Activated CD8-positive, alpha-beta T cell treated with anti-CD3 and anti-CD28 coated beads for 36 hours (primary cell): ENCODE measurements at regions of chr11 and their contacts with region 1.

Region 1: GRCh38 chr11:6377902-6378639 is 12.2 kb upstream of the SMPD1 start:
- DNase-seq: no peak
- ATAC-seq: peak; percentile 70
- H3K4me3 Mint-ChIP-seq: no peak overlapping the region
- H3K27ac Mint-ChIP-seq: peak overlapping the region; percentile 69
- H3K4me1 Mint-ChIP-seq: peaks cover 24% of the 10 kb centered on the region
- H3K27me3 Mint-ChIP-seq: no peaks in the 10 kb centered on the region
- CTCF ChIP-seq: no peak

Region 2: GRCh38 chr11:6353367-6353987 is 24.6 kb before region 1 on chr11:
- CTCF ChIA-PET with region 1: interaction called, 11 read pairs
- POLR2A ChIA-PET with region 1: no interaction called
- intact Hi-C with region 1: no loop called
- DNase-seq: peak; percentile 68
- ATAC-seq: peak; percentile 65
- H3K4me3 Mint-ChIP-seq: no peak overlapping the region
- H3K27ac Mint-ChIP-seq: no peak overlapping the region
- H3K4me1 Mint-ChIP-seq: peaks cover 28% of the 10 kb centered on the region
- H3K27me3 Mint-ChIP-seq: no peaks in the 10 kb centered on the region
- CTCF ChIP-seq: peak; percentile 100

Region 3: GRCh38 chr11:6402561-6402981 is 24.5 kb after region 1 on chr11:
- CTCF ChIA-PET with region 1: interaction called, 15 read pairs
- POLR2A ChIA-PET with region 1: interaction called, 9 read pairs
- intact Hi-C with region 1: no loop called
- DNase-seq: peak; percentile 92
- ATAC-seq: peak; percentile 82
- H3K4me3 Mint-ChIP-seq: peak overlapping the region; percentile 50
- H3K27ac Mint-ChIP-seq: peak overlapping the region; percentile 93
- H3K4me1 Mint-ChIP-seq: peaks cover 75% of the 10 kb centered on the region
- H3K27me3 Mint-ChIP-seq: no peaks in the 10 kb centered on the region
- CTCF ChIP-seq: no peak

Region 4: DNA sequence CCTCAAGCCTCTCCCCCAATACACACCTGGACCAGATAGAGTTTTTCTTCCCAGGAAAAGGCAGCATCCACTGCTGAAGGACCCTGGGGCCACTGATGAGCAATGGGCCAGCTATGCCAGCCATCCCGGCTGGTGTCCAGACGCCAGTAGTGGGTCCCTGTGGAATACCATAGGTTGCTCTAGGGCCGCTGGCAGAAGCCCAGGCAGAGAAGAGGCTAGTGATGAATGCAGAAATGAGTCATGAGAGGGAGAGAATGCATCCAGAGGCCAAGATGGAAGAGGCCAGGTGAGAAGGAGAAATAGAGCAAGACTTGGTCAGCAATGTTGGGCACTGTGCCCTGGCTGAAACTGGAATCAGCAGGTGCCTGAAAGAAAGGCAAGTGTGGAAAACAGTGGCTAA is 53.8 kb after region 1 on chr11:
- CTCF ChIA-PET with region 1: interaction called, 47 read pairs
- POLR2A ChIA-PET with region 1: no interaction called
- intact Hi-C with region 1: no loop called
- DNase-seq: no peak
- ATAC-seq: no peak
- H3K4me3 Mint-ChIP-seq: no peak overlapping the region
- H3K27ac Mint-ChIP-seq: no peak overlapping the region
- H3K4me1 Mint-ChIP-seq: peaks cover 3% of the 10 kb centered on the region
- H3K27me3 Mint-ChIP-seq: no peaks in the 10 kb centered on the region
- CTCF ChIP-seq: no peak

Region 5: DNA sequence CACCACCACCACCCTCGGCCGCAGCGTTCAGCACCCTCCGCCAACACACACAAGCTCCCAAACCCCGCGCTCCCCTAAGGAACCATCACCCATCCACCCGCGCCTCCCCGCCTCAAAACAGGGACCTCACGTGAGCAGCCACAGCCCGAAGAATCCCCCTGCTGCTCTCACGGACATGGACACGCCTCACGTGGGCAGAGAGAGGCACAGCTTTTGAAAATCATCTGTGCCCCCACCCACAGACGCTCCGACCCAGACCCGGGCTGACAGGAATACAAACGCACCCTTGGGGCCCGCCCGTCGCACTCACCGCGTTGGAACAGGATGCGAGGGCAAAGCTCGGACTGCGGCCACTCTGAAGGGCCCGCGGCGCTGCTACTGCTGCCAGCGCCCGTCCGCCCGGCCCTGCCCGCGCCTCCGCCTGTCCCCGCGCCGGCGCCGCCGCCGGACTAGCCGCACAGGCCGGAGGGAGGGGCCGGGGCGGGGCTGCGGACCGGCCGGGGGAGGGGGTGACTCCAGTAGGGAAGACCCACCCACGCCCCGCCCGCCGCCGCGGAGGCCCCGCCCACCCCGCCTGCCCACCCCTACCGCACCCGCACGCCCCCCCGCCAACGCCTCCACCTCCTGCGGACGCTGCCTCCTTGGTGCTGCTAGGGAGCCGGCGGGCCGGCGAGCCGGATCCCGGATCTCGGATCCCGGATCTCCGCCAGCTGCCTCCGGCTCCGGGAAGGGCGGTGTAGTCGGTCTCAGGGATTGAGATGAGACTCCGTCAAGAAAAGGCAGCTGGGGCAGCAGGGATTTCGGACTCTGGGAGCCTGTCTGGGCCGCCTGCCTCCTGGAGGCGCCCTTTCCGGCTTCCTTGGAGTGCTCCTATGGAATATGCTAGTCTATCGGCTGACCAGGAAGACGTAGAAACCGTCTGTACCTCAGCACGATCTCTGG is 95.7 kb after region 1 on chr11 and contains the start of gene TRIM3:
- CTCF ChIA-PET with region 1: interaction called, 41 read pairs
- POLR2A ChIA-PET with region 1: no interaction called
- intact Hi-C with region 1: no loop called
- DNase-seq: peak; percentile 64
- ATAC-seq: peak; percentile 66
- H3K4me3 Mint-ChIP-seq: peak within 1 kb of the TSS; percentile 76
- H3K27ac Mint-ChIP-seq: peak within 1 kb of the TSS; percentile 18
- H3K4me1 Mint-ChIP-seq: peaks cover 10% of the 10 kb centered on the region
- H3K27me3 Mint-ChIP-seq: no peaks in the 10 kb centered on the region
- CTCF ChIP-seq: no peak
- total RNA-seq, gene TRIM3: 4.4 to 5.5 TPM

Region 6: DNA sequence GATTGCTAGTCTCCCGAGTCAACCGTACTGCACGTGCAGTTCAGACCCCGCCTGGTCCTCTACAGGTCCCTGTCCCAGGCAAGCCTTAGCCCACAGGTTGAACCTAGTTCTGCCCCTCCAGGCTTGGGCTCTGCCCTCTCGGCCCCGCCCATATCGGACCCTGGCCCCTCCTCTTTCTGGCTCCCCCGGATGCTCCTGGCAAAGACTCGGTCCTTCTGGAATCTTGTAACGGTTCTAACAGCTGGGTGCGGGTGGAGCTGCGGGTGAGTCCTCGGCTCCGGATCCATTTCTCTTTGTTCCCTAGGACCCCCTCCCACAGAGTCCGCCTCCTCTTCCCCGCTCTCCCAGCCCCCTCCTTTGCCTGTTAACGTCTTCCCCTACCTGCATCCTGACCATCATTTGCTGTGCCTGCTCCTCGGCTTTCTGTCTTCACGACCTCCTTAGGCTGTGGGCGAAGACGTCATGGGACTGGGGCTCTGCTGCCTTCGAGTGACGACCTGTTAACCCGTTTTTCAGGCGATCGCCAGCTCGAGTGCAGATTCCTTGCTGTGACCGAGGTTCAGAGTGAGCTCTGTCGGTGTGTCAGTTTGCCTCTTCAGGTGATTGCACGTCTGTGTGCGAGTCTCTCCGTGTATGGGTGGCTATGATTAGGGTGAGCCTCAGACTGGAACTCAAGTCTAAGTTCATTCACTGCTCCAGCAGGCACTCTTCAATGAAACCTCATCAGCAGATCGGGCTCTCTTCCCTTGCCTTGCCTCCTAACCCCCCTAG is 119.2 kb after region 1 on chr11 and contains the start of gene DNHD1:
- CTCF ChIA-PET with region 1: interaction called, 14 read pairs
- POLR2A ChIA-PET with region 1: interaction called, 4 read pairs
- intact Hi-C with region 1: no loop called
- DNase-seq: no peak
- ATAC-seq: no peak
- H3K4me3 Mint-ChIP-seq: no peak within 1 kb of the TSS
- H3K27ac Mint-ChIP-seq: no peak within 1 kb of the TSS
- H3K4me1 Mint-ChIP-seq: peaks cover 4% of the 10 kb centered on the region
- H3K27me3 Mint-ChIP-seq: no peaks in the 10 kb centered on the region
- CTCF ChIP-seq: no peak
- total RNA-seq, gene DNHD1: 27.5 to 28.2 TPM

Region 7: GRCh38 chr11:6705905-6706535 is 327.9 kb after region 1 on chr11:
- CTCF ChIA-PET with region 1: interaction called, 20 read pairs
- POLR2A ChIA-PET with region 1: no interaction called
- intact Hi-C with region 1: no loop called
- DNase-seq: peak; percentile 64
- ATAC-seq: peak; percentile 88
- H3K4me3 Mint-ChIP-seq: no peak overlapping the region
- H3K27ac Mint-ChIP-seq: peak overlapping the region; percentile 59
- H3K4me1 Mint-ChIP-seq: peaks cover 19% of the 10 kb centered on the region
- H3K27me3 Mint-ChIP-seq: no peaks in the 10 kb centered on the region
- CTCF ChIP-seq: peak; percentile 85